Naive thymus-derived CD4-positive, alpha-beta T cell (primary cell): ENCODE measurements at regions of chr22 and their contacts with region 1.

Region 1: GRCh38 chr22:38569972-38570778 is at the start of gene DMC1:
- DNase-seq: peak; percentile 77 to 96 (median 89)
- ATAC-seq: peak; percentile 99
- H3K4me3 ChIP-seq: peak within 1 kb of the TSS; percentile 88
- H3K4me3 Mint-ChIP-seq: peak within 1 kb of the TSS; percentile 89 to 94 (median 92)
- H3K27ac ChIP-seq: peak within 1 kb of the TSS; percentile 87
- H3K27ac Mint-ChIP-seq: peak within 1 kb of the TSS; percentile 75 to 94 (median 91)
- H3K4me1 ChIP-seq: peaks cover 7 to 8% of the 10 kb centered on the region in 2 donors
- H3K4me1 Mint-ChIP-seq: peaks cover 7 to 21% (median 17%) of the 10 kb centered on the region in 7 donors
- H3K27me3 ChIP-seq: no peaks in the 10 kb centered on the region
- H3K27me3 Mint-ChIP-seq: peaks cover 0 to 7% (median 0%) of the 10 kb centered on the region in 5 donors
- total RNA-seq, gene DMC1: 0.32 to 7.4 (median 0.65) TPM in 4 of 5 experiments, not detected in the other

Region 2: GRCh38 chr22:38051900-38052862 is 518.0 kb before region 1 on chr22:
- CTCF ChIA-PET with region 1: interaction called, 22 read pairs
- POLR2A ChIA-PET with region 1: interaction called, 6 read pairs
- intact Hi-C with region 1: loop called in 1 of 2 experiments (anchors 1 kb)
- DNase-seq: peak; percentile 59 to 75 (median 69)
- ATAC-seq: peak; percentile 88
- H3K4me3 ChIP-seq: no peak overlapping the region
- H3K4me3 Mint-ChIP-seq: peak overlapping the region in 2 of 10 donors; percentile 13 to 51
- H3K27ac ChIP-seq: no peak overlapping the region
- H3K27ac Mint-ChIP-seq: peak overlapping the region in 2 of 9 donors; percentile 38 to 71
- H3K4me1 ChIP-seq: peaks cover 10 to 11% of the 10 kb centered on the region in 2 donors
- H3K4me1 Mint-ChIP-seq: peaks cover 0 to 14% (median 9%) of the 10 kb centered on the region in 7 donors
- H3K27me3 ChIP-seq: no peaks in the 10 kb centered on the region
- H3K27me3 Mint-ChIP-seq: peaks cover 0 to 28% (median 8%) of the 10 kb centered on the region in 5 donors

Region 3: DNA sequence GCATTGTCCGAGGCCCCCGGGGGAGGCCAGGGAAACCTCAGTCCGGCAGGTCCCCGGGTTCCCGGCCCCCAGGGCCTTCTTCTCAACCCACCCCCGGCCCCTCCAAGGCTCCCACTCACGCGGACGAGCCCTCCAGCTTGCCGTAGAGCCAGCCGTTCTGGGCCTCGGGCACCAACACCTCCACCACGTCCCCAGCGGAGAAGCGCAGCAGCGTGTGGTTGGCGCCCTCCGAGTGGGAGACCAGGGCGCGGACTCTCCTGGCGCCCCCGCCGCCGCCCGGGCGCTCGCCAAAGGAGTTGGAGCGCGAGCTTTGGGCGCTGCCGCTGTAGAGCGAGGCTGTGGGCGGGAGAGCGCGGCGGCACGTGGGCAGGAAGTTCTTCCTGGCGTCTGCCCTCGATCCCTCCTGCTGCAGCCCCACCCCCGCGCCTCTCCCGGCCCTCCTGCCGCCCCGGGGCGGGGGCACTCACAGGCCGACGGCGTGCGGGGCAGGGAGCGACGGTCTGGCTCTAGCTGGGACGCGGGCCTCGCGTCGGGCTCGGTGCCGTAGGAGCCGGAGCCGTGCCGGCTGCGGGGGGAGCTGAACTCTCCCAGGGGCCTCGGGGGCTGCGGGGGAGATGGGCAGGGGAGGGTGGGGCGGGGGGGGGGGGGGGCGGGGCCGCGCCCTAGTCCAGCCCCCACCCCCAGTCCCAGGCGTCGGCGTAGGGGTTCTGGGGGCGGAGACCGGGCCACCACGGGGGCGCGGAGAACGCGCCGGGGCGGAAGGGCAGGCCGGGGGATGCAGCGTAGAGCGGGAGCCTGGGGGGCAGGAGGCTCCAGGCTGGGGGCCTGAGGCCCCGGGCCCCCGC is 481.3 kb before region 1 on chr22:
- CTCF ChIA-PET with region 1: no interaction called
- POLR2A ChIA-PET with region 1: no interaction called
- intact Hi-C with region 1: no loop called
- DNase-seq: no peak
- ATAC-seq: no peak
- H3K4me3 ChIP-seq: no peak overlapping the region
- H3K4me3 Mint-ChIP-seq: no peak overlapping the region
- H3K27ac ChIP-seq: no peak overlapping the region
- H3K27ac Mint-ChIP-seq: no peak overlapping the region
- H3K4me1 ChIP-seq: no peaks in the 10 kb centered on the region
- H3K4me1 Mint-ChIP-seq: no peaks in the 10 kb centered on the region
- H3K27me3 ChIP-seq: no peaks in the 10 kb centered on the region
- H3K27me3 Mint-ChIP-seq: peaks cover 0 to 16% (median 6%) of the 10 kb centered on the region in 5 donors

Region 4: GRCh38 chr22:38181453-38182247 is 388.5 kb before region 1 on chr22 and contains the start of gene PLA2G6:
- CTCF ChIA-PET with region 1: no interaction called
- POLR2A ChIA-PET with region 1: no interaction called
- intact Hi-C with region 1: loop called (anchors 1 kb)
- DNase-seq: peak; percentile 86 to 99 (median 90)
- ATAC-seq: peak; percentile 96
- H3K4me3 ChIP-seq: peak within 1 kb of the TSS; percentile 90
- H3K4me3 Mint-ChIP-seq: peak within 1 kb of the TSS; percentile 88 to 100 (median 94)
- H3K27ac ChIP-seq: peak within 1 kb of the TSS; percentile 67
- H3K27ac Mint-ChIP-seq: peak within 1 kb of the TSS; percentile 36 to 94 (median 89)
- H3K4me1 ChIP-seq: peaks cover 16 to 30% of the 10 kb centered on the region in 2 donors
- H3K4me1 Mint-ChIP-seq: peaks cover 34 to 50% (median 42%) of the 10 kb centered on the region in 7 donors
- H3K27me3 ChIP-seq: no peaks in the 10 kb centered on the region
- H3K27me3 Mint-ChIP-seq: peaks cover 0 to 14% (median 0%) of the 10 kb centered on the region in 5 donors
- total RNA-seq, gene PLA2G6: 66.5 to 252 (median 105) TPM

Region 5: DNA sequence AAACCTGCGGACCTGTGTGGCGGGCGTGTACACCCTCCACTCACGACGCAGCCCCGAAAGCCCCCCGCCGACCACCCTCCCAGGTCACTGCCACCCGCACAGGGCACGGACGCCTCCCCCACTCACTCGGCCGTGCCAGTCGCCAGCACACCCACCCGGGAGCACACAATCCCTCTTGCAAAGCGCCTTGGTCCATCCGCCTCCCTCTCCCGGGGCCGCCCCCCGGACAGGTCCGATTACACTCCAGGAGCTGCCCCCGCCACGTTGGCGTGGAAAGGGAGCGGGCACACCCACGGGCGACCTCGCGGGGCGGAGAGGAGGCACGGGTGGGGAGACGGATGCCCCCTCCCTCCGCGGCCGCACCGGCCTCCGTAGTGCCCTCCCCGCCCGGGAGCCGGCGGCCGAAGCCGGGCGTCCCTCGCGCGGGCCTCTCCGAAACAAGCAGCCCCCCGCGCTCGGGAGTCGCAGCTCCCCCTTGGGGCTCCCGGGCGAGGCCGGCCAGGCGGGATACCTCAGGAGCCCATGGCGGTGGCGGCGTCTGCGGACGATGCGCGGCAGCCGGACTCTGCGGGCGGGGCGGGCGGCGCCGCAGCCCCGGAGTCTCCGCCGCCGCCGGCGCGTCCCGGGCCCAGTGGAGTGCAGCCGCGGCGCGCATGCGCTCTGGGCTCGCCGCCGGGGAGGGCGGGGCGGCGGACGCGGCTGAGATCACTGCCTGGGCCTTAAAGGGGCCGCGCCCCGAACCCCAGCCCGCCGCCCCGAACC is 297.6 kb before region 1 on chr22 and contains the start of gene TMEM184B:
- CTCF ChIA-PET with region 1: no interaction called
- POLR2A ChIA-PET with region 1: no interaction called
- intact Hi-C with region 1: loop called (anchors 1 to 10 kb)
- DNase-seq: peak; percentile 71 to 93 (median 87)
- ATAC-seq: peak; percentile 98
- H3K4me3 ChIP-seq: peak within 1 kb of the TSS; percentile 77
- H3K4me3 Mint-ChIP-seq: peak within 1 kb of the TSS; percentile 90 to 96 (median 94)
- H3K27ac ChIP-seq: peak within 1 kb of the TSS; percentile 89
- H3K27ac Mint-ChIP-seq: peak within 1 kb of the TSS; percentile 92 to 99 (median 96)
- H3K4me1 ChIP-seq: peaks cover 19 to 29% of the 10 kb centered on the region in 2 donors
- H3K4me1 Mint-ChIP-seq: peaks cover 33 to 62% (median 54%) of the 10 kb centered on the region in 7 donors
- H3K27me3 ChIP-seq: no peaks in the 10 kb centered on the region
- H3K27me3 Mint-ChIP-seq: peaks cover 0 to 8% (median 0%) of the 10 kb centered on the region in 5 donors
- total RNA-seq, gene TMEM184B: 26.9 to 41.3 (median 35.0) TPM

Region 6: DNA sequence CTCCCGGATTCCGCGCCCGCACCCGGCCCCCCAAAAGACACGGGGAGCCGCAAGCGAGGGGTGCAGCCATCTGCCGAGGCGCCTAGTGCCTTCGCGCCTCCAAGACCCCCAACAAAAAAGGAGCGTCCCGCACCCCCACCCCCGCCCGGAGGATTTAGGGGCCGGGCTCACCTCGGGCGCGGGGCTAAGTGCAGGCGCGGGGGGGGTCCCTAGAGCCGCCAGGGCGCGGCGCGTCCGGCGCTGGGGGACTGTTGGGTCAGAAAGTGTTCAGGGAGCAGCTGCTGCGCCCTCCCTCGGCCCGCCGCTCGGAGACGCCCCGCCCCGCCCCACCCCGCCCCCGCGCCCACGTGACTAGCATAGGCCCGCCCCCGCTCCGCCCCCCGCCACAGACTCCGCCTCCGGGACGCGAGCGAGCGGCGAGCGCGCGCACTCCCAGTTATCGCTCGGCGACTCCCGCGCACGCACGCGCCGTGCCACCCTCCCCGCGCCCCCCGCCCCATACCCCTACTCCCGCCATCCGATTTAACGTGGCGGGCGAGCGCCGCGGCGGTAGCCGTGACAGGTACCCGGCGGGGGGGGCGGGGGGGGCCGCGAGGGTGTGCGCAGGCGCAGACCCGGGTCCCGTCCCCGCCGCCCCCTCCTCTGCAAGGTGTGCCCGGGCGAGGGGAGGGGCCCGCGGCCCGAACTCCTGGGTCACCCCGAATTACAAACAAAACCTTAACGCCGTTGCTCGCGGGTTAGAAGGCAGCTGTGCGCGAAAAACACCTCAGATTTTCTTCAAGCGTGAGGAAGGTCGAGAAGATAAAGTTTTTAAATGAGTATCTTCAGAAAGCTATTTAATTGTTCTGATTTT is 171.3 kb before region 1 on chr22:
- CTCF ChIA-PET with region 1: no interaction called
- POLR2A ChIA-PET with region 1: no interaction called
- intact Hi-C with region 1: loop called (anchors 1 kb)
- DNase-seq: peak; percentile 74 to 91 (median 82)
- ATAC-seq: peak; percentile 93
- H3K4me3 ChIP-seq: peak overlapping the region; percentile 46
- H3K4me3 Mint-ChIP-seq: peak overlapping the region; percentile 78 to 93 (median 85)
- H3K27ac ChIP-seq: peak overlapping the region; percentile 69
- H3K27ac Mint-ChIP-seq: peak overlapping the region in 8 of 9 donors; percentile 55 to 84 (median 76)
- H3K4me1 ChIP-seq: no peaks in the 10 kb centered on the region
- H3K4me1 Mint-ChIP-seq: peaks cover 6 to 41% (median 33%) of the 10 kb centered on the region in 7 donors
- H3K27me3 ChIP-seq: no peaks in the 10 kb centered on the region
- H3K27me3 Mint-ChIP-seq: peaks cover 0 to 30% (median 0%) of the 10 kb centered on the region in 5 donors

Region 7: GRCh38 chr22:38531251-38531938 is 38.8 kb before region 1 on chr22:
- CTCF ChIA-PET with region 1: no interaction called
- POLR2A ChIA-PET with region 1: interaction called, 3 read pairs
- intact Hi-C with region 1: loop called (anchors 1 to 2 kb)
- DNase-seq: no peak
- ATAC-seq: peak; percentile 41
- H3K4me3 ChIP-seq: no peak overlapping the region
- H3K4me3 Mint-ChIP-seq: peak overlapping the region; percentile 3 to 80 (median 64)
- H3K27ac ChIP-seq: peak overlapping the region; percentile 50
- H3K27ac Mint-ChIP-seq: peak overlapping the region; percentile 82 to 90 (median 84)
- H3K4me1 ChIP-seq: peaks cover 0 to 14% of the 10 kb centered on the region in 2 donors
- H3K4me1 Mint-ChIP-seq: peaks cover 6 to 26% (median 16%) of the 10 kb centered on the region in 7 donors
- H3K27me3 ChIP-seq: no peaks in the 10 kb centered on the region
- H3K27me3 Mint-ChIP-seq: no peaks in the 10 kb centered on the region

Region 8: DNA sequence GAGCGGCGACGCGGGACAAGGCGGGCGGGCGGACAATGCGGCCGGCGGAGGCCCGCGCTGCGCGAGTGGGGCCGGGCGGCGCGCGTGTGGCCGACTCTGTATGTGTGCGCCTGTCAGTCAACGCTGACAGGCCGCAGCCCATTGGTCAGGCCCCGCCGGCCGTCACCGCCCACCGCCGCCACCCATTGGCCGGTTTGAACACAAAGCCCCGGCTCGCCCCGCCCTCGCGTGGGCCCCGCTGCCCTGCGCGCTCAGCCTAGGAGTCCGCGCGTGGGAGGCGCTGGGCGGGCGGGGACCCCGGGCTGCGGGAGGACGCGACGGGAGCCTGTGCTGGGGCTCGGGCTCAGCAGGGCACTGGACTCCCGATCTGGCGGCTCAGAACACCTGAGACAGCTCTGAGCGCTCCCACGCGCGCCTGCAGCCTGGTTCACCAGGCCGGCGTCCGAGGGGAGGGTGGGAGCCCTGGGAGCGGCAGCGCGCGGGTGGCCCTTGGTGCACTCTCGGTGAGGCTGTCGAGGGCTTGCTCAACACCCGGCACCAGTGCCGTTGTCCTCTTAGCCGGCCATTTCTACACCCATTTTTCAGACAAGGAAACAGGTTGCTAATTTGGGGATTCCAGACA is 185.8 kb after region 1 on chr22 and contains the start of gene SUN2:
- CTCF ChIA-PET with region 1: no interaction called
- POLR2A ChIA-PET with region 1: no interaction called
- intact Hi-C with region 1: loop called in 1 of 2 experiments (anchors 5 kb)
- DNase-seq: peak; percentile 89 to 98 (median 92)
- ATAC-seq: peak; percentile 85
- H3K4me3 ChIP-seq: peak within 1 kb of the TSS; percentile 95
- H3K4me3 Mint-ChIP-seq: peak within 1 kb of the TSS; percentile 95 to 99 (median 96)
- H3K27ac ChIP-seq: peak within 1 kb of the TSS; percentile 81
- H3K27ac Mint-ChIP-seq: peak within 1 kb of the TSS; percentile 89 to 100 (median 99)
- H3K4me1 ChIP-seq: peaks cover 48 to 54% of the 10 kb centered on the region in 2 donors
- H3K4me1 Mint-ChIP-seq: peaks cover 42 to 67% (median 62%) of the 10 kb centered on the region in 7 donors
- H3K27me3 ChIP-seq: no peaks in the 10 kb centered on the region
- H3K27me3 Mint-ChIP-seq: no peaks in the 10 kb centered on the region
- total RNA-seq, gene SUN2: 509 to 977 (median 558) TPM